Left ventricle myocardium superior (tissue), 1 donor: ENCODE measurements at regions of chr10 and their contacts with region 1.

Region 1: GRCh38 chr10:101779544-101780186 is 3.6 kb downstream of the NPM3 start:
- DNase-seq: peak; percentile 90
- ATAC-seq: peak; percentile 82

Region 2: DNA sequence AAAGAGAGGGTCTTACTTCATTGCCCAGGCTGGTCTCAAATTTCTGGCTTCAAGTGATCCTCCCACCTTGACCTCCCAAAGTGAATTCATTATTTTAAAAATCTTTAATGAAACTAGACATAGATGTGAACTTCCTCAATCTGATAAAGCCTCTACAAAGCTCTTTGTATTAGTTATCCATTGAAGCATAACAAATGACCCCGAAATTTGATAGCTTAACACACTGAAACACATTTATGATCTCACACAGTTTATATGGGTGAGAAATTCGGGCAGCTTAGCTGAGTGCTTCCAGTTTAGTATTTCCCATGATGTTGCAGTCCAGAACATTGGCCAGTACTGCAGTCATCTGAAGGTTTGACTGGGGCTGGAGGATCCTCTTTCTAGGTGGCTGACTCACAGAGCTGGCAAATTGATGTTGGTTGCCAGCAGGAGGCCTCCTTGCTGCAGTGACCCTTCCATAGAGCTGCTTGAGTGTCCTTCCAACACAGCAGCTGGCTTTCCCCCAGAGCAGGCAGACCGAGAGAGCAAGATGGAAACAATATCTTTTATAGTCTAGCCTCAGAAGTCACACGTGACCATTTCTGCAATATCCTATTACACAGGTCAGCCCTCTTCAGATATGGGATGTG is 1333.4 kb before region 1 on chr10:
- intact Hi-C with region 1: no loop called
- DNase-seq: no peak
- ATAC-seq: no peak

Region 3: GRCh38 chr10:101602761-101603398 is 176.8 kb before region 1 on chr10:
- intact Hi-C with region 1: loop called (anchors 10 kb)
- DNase-seq: peak; percentile 83
- ATAC-seq: peak; percentile 83

Region 4: GRCh38 chr10:101920546-101920945 is 140.9 kb after region 1 on chr10:
- intact Hi-C with region 1: no loop called
- DNase-seq: no peak
- ATAC-seq: no peak